GM10248 (cell line): ENCODE measurements at regions of chr4 and their contacts with region 1.

Region 1: GRCh38 chr4:109998867-109999584 is 86.3 kb downstream of the EGF start:
- DNase-seq: peak; percentile 71
- CTCF ChIP-seq: peak; percentile 65

Region 2: GRCh38 chr4:109947457-109947856 is 51.6 kb before region 1 on chr4:
- CTCF ChIA-PET with region 1: no interaction called
- POLR2A ChIA-PET with region 1: no interaction called
- DNase-seq: no peak
- CTCF ChIP-seq: no peak

Region 3: DNA sequence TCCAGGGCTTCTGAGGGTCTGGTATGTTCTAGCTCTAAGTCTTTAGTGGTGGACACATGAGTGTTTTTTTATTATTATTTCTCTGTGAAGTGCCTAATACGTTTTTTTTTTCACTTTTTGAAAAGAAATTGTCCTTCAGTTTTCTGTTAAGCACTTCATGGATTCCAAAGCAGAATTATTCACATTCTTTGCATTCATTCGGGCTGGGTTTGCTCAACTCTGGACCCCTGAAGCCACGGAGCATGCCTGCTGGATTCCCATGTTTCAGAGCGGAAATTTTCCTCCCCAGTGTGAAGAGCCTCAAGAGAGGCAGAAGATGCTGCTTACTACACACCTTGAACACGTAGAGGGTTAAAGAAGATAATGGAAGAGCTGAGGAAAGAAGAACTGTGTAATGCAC is 21.1 kb after region 1 on chr4:
- CTCF ChIA-PET with region 1: interaction called, 13 read pairs
- POLR2A ChIA-PET with region 1: no interaction called
- DNase-seq: no peak
- CTCF ChIP-seq: no peak

Region 4: GRCh38 chr4:110165382-110166285 is 166.6 kb after region 1 on chr4:
- CTCF ChIA-PET with region 1: no interaction called
- POLR2A ChIA-PET with region 1: no interaction called
- DNase-seq: no peak
- CTCF ChIP-seq: no peak

Region 5: DNA sequence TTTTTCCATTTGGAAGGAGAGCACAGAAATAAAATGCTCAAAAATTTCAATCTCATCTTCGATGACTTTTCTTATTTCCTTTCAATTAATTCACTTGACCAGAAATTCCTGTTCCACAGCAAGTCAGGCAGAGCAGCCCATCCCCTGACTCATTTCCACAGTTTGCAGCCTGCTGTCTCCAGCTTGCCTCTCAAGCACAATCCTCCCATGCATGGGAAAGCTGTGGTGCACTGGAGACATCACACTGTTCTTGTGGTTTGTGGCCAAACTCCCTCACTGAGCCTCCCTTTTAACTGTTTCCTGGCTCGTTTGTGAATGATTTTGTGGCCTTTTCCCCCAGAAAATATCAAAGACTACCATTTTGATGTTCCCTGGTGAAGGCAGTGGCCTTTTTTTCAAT is 362.9 kb after region 1 on chr4:
- CTCF ChIA-PET with region 1: no interaction called
- POLR2A ChIA-PET with region 1: no interaction called
- DNase-seq: no peak
- CTCF ChIP-seq: no peak

Region 6: DNA sequence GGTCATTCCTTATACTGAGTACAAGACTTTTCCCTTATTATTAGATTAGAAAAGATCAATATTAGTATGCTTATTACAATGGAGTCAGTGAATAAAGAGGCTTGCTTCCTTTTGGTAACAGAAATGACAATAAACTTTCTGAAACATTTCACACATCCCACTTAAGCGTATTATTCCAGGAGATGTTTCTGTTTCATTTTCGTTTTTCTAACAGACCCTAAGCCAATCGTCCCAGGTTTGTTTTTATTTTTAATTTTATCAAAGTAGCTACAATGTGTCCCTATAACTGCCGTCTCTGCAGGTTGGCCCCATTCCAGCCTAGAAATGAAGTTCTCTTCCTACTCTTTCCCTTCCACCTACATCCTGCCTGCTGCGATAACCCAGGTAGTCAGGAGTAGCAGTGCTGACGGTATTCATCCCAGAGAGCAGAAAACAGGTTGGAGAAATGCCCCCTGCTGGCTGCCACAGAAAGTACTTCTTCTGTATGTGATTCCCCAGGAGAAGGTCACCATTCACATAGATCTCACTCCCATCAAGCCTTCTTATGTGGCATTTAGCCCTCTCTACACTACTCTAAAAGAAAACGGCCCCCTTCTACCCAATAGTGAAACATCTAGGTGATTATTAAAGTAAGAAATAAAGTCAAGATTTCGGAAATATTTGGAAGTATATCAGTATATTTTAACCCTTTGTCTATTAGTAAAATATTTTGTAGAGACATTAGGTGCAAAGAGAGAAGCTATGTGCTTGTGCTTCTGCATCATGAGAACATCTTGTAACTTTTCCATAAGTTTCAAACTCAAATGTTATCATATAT is 517.3 kb after region 1 on chr4:
- CTCF ChIA-PET with region 1: interaction called, 673 read pairs
- POLR2A ChIA-PET with region 1: no interaction called
- DNase-seq: peak; percentile 39
- CTCF ChIP-seq: peak; percentile 79